ENCODE measurements at regions of chr10 and their contacts with region 1.

Region 1: GRCh38 chr10:115129752-115130151 is 36.6 kb downstream of the ATRNL1 start:
- DNase-seq: no peak
- ATAC-seq: no peak
- H3K4me3 ChIP-seq: no peak overlapping the region
- H3K27ac ChIP-seq: no peak overlapping the region
- H3K4me1 ChIP-seq: no peaks in the 10 kb centered on the region
- H3K27me3 ChIP-seq: no peaks in the 10 kb centered on the region

Region 2: GRCh38 chr10:114876602-114877300 is 253.0 kb before region 1 on chr10:
- intact Hi-C with region 1: loop called (anchors 1 to 10 kb)
- DNase-seq: peak; percentile 60 to 87 (median 81)
- ATAC-seq: peak; percentile 81
- H3K4me3 ChIP-seq: no peak overlapping the region
- H3K27ac ChIP-seq: no peak overlapping the region
- H3K4me1 ChIP-seq: no peaks in the 10 kb centered on the region
- H3K27me3 ChIP-seq: no peaks in the 10 kb centered on the region

Region 3: DNA sequence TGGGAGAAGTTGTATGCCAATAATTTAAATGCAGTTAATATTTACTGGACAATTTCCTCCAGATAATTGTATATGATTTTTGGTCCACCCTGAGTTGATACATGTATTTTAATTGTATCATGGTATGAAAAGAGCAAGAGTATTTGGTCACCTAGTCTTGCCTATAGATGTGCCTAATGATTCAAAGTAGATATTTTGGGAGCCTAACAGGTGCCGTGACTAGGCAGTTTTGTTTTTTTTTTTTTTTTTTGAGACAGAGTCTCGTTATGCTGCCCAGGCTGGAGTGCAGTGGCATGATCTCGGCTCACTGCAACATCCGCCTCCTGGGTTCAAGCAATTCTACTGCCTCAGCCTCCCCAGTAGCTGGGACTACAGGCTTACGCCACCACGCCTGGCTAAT is 95.9 kb before region 1 on chr10:
- intact Hi-C with region 1: no loop called
- DNase-seq: no peak
- ATAC-seq: no peak
- H3K4me3 ChIP-seq: no peak overlapping the region
- H3K27ac ChIP-seq: no peak overlapping the region
- H3K4me1 ChIP-seq: peaks cover 4% of the 10 kb centered on the region
- H3K27me3 ChIP-seq: no peaks in the 10 kb centered on the region

Region 4: DNA sequence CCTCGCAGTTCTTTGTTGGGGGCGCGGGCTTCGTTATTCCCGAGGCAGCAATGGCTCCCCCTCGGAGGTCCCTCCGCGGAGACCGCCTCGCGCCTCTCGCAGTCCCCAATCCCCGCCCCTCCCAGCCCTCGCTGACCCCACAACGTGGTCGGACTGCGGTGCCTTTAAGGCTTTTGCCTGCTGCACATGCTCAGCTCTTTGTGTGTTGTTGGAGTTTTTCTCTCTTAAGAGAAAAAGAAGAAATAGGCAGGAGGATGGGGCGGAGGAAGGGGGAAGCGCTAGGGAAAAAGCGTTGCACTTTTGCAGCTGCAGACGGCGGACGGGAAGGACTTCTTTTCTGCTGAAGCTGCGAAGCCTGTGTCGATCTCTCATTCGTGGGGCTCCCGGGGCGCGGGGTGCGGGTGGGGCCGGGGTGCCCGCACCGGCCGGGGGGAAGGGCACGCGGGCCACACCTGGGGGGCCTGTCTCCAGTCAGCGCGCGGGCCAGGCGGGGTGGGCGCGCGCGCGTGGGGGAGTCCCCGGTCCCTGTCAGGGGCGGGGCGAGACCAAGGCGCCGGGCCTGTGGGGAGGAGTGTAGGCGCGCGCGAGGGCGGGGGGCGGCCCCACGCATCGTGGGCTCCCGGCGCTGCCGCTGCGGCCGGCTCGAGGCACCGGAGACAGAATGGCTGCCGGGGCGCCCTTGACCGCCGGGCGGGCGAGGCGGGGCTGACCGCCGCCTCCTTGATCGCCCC is 37.0 kb before region 1 on chr10:
- intact Hi-C with region 1: no loop called
- DNase-seq: peak; percentile 27 to 70 (median 51)
- ATAC-seq: peak; percentile 84 to 89
- H3K4me3 ChIP-seq: peak overlapping the region; percentile 71
- H3K27ac ChIP-seq: no peak overlapping the region
- H3K4me1 ChIP-seq: no peaks in the 10 kb centered on the region
- H3K27me3 ChIP-seq: no peaks in the 10 kb centered on the region